ENCODE measurements at regions of chr3 and their contacts with region 1.

Region 1: GRCh38 chr3:4416961-4417360 is 50.1 kb downstream of the SUMF1 start:
- DNase-seq: peak; percentile 87 to 93
- H3K4me3 ChIP-seq: no peak overlapping the region
- H3K27ac ChIP-seq: peak overlapping the region; percentile 44; the same call in 1 of the 2 replicates
- H3K4me1 ChIP-seq: peaks cover 30% of the 10 kb centered on the region
- H3K27me3 ChIP-seq: no peaks in the 10 kb centered on the region
- CTCF ChIP-seq: no peak

Region 2: DNA sequence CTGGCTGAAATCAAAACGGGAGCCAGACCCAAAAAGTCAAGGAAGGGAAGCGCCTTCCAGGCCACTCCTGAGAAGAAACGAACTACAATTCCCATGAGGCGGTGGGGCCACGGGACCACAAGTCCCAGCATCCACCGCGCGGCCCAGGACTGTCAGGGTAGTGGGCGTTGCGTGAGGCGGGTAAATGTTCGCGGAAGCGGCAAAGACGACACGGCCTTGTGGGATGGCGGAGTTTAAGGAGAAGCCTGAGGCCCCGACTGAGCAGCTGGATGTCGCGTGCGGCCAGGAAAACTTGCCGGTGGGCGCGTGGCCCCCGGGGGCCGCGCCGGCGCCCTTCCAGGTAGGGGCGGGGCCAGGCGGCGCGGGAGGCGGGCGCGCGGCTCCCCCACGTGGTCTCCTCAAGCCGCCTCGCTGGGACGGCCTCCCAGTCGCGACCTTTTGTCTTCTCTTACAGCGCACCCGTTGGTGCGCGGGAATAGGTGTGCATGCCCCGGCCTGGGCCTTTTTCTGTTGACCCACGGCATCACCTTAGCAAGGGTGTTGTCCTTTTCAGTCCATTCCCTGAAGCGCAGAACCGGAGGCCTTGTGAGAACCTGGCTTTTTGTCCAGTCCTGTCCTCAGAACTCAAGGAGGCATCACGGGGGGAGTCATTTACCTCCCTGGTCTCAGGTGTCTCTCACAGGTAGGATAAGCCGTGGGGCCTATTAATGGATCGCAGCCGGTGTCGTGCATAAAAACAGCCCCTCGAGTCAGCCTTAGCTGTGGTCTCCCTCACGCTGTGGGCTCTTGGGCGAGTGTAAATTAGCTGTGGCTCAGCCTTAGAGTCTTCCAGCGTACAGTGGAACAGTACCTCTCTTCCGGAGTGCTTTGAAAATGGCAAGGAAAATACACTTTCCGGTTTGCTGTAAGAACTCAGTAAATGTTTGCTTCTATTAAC is 113.5 kb before region 1 on chr3 and contains the start of gene SETMAR:
- CTCF ChIA-PET with region 1: no interaction called
- POLR2A ChIA-PET with region 1: interaction called, 16 read pairs
- intact Hi-C with region 1: no loop called
- DNase-seq: peak; percentile 58 to 76
- H3K4me3 ChIP-seq: peak within 1 kb of the TSS; percentile 70
- H3K27ac ChIP-seq: peak within 1 kb of the TSS; percentile 50; the same call in 1 of the 2 replicates
- H3K4me1 ChIP-seq: no peaks in the 10 kb centered on the region
- H3K27me3 ChIP-seq: no peaks in the 10 kb centered on the region
- CTCF ChIP-seq: no peak
- total RNA-seq, gene SETMAR: 4.9 and 7.6 TPM in 2 replicates

Region 3: DNA sequence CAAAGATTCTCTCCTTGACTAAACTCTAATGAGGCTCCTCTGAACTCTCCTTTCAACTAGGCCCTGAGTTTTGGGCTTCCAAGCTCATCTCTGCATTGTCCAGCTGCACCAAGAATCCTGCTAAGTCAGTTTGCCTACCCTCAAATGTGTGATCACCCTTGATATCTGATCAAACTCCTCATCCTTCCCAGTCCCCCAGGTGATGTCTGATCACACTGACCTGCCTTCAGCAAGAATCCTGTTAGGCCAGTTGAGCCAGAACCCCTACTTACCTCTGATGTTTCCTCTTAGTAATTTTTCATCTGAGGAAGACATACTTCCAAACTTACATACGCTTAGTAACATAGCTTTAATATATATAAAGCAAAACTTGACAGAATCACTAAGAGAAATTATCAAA is 21.3 kb after region 1 on chr3:
- CTCF ChIA-PET with region 1: no interaction called
- POLR2A ChIA-PET with region 1: no interaction called
- intact Hi-C with region 1: loop called (anchors 2 kb)
- DNase-seq: peak; percentile 64 to 85
- H3K4me3 ChIP-seq: no peak overlapping the region
- H3K27ac ChIP-seq: peak overlapping the region; percentile 37
- H3K4me1 ChIP-seq: peaks cover 9% of the 10 kb centered on the region
- H3K27me3 ChIP-seq: no peaks in the 10 kb centered on the region
- CTCF ChIP-seq: no peak

Measured in PC-9 (cell line).